CD4-positive, alpha-beta memory T cell (primary cell): ENCODE measurements at regions of chr3 and their contacts with region 1.

Region 1: GRCh38 chr3:128322066-128323022 is 144.3 kb downstream of the DNAJB8 start:
- DNase-seq: peak; percentile 54 to 63 (median 61)
- H3K4me3 ChIP-seq: no peak overlapping the region
- H3K4me3 Mint-ChIP-seq: no peak overlapping the region
- H3K27ac ChIP-seq: no peak overlapping the region
- H3K27ac Mint-ChIP-seq: peak overlapping the region in 5 of 7 donors; percentile 18 to 57 (median 22)
- H3K4me1 ChIP-seq: peaks cover 42% of the 10 kb centered on the region
- H3K4me1 Mint-ChIP-seq: peaks cover 9 to 63% (median 29%) of the 10 kb centered on the region in 4 donors
- H3K27me3 ChIP-seq: no peaks in the 10 kb centered on the region
- H3K27me3 Mint-ChIP-seq: no peaks in the 10 kb centered on the region

Region 2: DNA sequence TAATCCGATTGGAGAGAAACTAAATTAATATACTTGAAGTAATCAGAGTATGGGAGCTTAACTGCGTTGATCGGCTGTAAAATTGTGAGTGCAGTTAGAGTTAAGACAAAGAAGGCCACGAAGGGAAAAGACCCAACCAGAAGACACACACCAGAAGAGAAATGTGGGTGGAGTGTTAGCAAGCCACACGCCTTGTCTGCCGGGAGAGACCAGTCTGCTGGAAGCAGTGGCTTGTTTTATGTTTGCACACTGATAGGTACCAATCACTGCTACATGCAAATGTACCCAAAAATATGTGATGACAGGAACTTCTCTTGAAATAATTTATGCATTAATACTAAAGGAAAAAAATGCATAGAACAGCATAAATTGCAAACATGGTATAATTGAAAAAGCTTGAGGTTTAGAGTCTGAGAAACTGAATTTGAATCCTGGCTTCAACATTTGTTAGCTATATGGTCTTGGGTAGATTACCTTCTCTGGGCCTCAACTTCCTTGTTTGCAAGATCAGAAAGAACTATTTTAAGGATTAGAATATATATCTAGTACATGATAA is 146.0 kb before region 1 on chr3:
- CTCF ChIA-PET with region 1: interaction called, 10 read pairs
- POLR2A ChIA-PET with region 1: no interaction called
- intact Hi-C with region 1: no loop called
- DNase-seq: no peak
- H3K4me3 ChIP-seq: no peak overlapping the region
- H3K4me3 Mint-ChIP-seq: no peak overlapping the region
- H3K27ac ChIP-seq: no peak overlapping the region
- H3K27ac Mint-ChIP-seq: no peak overlapping the region
- H3K4me1 ChIP-seq: no peaks in the 10 kb centered on the region
- H3K4me1 Mint-ChIP-seq: peaks cover 22 to 52% (median 35%) of the 10 kb centered on the region in 4 donors
- H3K27me3 ChIP-seq: no peaks in the 10 kb centered on the region
- H3K27me3 Mint-ChIP-seq: no peaks in the 10 kb centered on the region

Region 3: DNA sequence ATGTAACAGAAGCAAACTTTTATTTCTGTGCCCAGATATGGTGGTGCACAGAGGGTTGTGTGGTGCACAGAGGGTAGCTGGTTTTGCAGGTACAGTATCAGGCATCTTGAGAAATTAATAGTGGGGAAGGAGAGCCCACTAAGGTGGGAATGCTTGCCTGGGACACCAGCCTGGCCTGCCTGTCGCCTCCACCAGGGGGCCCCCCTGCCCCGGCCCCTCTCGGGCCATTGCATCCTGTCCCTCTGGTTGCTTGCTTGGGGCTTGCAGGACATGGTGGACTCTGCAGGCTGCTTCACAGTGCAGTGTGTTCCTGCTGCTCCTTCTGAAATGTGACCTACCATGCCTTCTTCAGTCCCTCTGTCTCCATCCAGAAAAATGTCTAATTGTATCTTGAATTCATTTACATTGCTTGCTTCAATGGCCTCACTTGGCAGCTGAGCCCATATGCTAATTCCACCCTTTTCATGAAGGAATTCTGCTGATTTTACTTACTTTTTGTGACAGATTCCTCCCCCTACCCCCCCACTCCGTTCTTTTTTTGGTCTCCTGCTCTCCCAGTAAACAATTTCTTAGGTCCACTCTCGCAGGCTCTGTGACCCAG is 95.4 kb before region 1 on chr3:
- CTCF ChIA-PET with region 1: interaction called, 145 read pairs
- POLR2A ChIA-PET with region 1: interaction called, 3 read pairs
- intact Hi-C with region 1: loop called (anchors 1 kb)
- DNase-seq: peak in 4 of 5 donors; percentile 19 to 30 (median 23)
- H3K4me3 ChIP-seq: no peak overlapping the region
- H3K4me3 Mint-ChIP-seq: peak overlapping the region in 2 of 8 donors; percentile 13 to 51
- H3K27ac ChIP-seq: no peak overlapping the region
- H3K27ac Mint-ChIP-seq: peak overlapping the region in 1 of 7 donors; percentile 0
- H3K4me1 ChIP-seq: no peaks in the 10 kb centered on the region
- H3K4me1 Mint-ChIP-seq: peaks cover 7 to 14% (median 11%) of the 10 kb centered on the region in 4 donors
- H3K27me3 ChIP-seq: no peaks in the 10 kb centered on the region
- H3K27me3 Mint-ChIP-seq: no peaks in the 10 kb centered on the region

Region 4: DNA sequence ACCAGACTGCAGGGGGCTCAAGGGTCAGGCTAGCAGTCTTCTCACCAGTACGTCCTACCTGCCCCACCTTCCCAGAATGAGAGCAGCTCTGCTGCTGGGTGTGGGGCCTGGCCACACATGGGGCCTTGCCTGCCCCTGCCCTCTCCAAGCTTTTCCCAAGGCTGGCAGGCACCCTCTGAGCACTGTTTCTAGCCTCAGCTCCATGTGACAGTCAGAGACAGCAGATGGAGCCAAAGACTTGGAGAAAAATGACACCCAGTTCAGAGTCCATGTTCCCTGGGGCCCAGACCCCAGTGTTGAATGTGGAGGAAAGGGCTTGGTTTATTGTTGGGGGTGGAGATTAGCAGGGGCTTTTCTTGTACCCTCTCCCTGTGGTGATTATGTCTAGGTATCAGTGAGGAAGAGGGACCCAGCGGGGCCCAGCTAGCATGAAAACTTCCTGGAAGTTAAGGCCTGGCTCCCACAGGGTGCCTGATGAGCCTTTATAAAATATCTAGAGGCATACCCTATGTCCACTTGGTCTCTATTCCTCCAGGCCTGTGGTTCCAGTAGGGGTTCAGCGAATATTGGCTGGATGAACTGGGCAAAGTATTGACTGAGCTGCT is 15.2 kb before region 1 on chr3:
- CTCF ChIA-PET with region 1: interaction called, 44 read pairs
- POLR2A ChIA-PET with region 1: no interaction called
- intact Hi-C with region 1: no loop called
- DNase-seq: no peak
- H3K4me3 ChIP-seq: no peak overlapping the region
- H3K4me3 Mint-ChIP-seq: no peak overlapping the region
- H3K27ac ChIP-seq: no peak overlapping the region
- H3K27ac Mint-ChIP-seq: peak overlapping the region in 1 of 7 donors; percentile 29
- H3K4me1 ChIP-seq: no peaks in the 10 kb centered on the region
- H3K4me1 Mint-ChIP-seq: peaks cover 4 to 10% (median 8%) of the 10 kb centered on the region in 4 donors
- H3K27me3 ChIP-seq: no peaks in the 10 kb centered on the region
- H3K27me3 Mint-ChIP-seq: no peaks in the 10 kb centered on the region

Region 5: DNA sequence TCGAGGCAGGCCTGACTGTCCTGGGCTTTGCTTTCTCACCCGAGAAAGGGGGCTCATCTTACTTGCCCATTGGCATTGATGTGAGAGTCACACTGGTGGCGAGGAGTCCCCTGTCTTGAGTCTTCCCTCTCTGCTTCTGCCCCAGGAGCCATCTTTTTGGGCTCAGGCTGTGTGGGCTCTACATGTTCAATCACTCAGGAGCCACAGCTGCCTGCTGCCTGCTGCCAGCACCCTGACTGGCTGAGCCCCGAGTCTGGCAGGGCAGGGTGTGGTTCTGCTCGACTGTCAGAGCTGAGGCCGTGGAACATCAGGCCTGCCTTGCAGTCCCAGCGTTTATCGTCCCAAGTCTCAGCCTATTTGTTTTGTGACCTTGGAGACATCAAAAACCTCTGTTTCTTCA is 11.8 kb after region 1 on chr3:
- CTCF ChIA-PET with region 1: interaction called, 12 read pairs
- POLR2A ChIA-PET with region 1: no interaction called
- intact Hi-C with region 1: no loop called
- DNase-seq: no peak
- H3K4me3 ChIP-seq: no peak overlapping the region
- H3K4me3 Mint-ChIP-seq: no peak overlapping the region
- H3K27ac ChIP-seq: no peak overlapping the region
- H3K27ac Mint-ChIP-seq: peak overlapping the region in 1 of 7 donors; percentile 8
- H3K4me1 ChIP-seq: no peaks in the 10 kb centered on the region
- H3K4me1 Mint-ChIP-seq: peaks cover 0 to 2% (median 0%) of the 10 kb centered on the region in 4 donors
- H3K27me3 ChIP-seq: no peaks in the 10 kb centered on the region
- H3K27me3 Mint-ChIP-seq: no peaks in the 10 kb centered on the region

Region 6: GRCh38 chr3:128344052-128344735 is 21.9 kb after region 1 on chr3:
- CTCF ChIA-PET with region 1: no interaction called
- POLR2A ChIA-PET with region 1: no interaction called
- intact Hi-C with region 1: no loop called
- DNase-seq: no peak
- H3K4me3 ChIP-seq: no peak overlapping the region
- H3K4me3 Mint-ChIP-seq: no peak overlapping the region
- H3K27ac ChIP-seq: no peak overlapping the region
- H3K27ac Mint-ChIP-seq: no peak overlapping the region
- H3K4me1 ChIP-seq: no peaks in the 10 kb centered on the region
- H3K4me1 Mint-ChIP-seq: no peaks in the 10 kb centered on the region
- H3K27me3 ChIP-seq: no peaks in the 10 kb centered on the region
- H3K27me3 Mint-ChIP-seq: no peaks in the 10 kb centered on the region

Region 7: GRCh38 chr3:128385080-128385832 is 62.9 kb after region 1 on chr3:
- CTCF ChIA-PET with region 1: no interaction called
- POLR2A ChIA-PET with region 1: no interaction called
- intact Hi-C with region 1: no loop called
- DNase-seq: no peak
- H3K4me3 ChIP-seq: no peak overlapping the region
- H3K4me3 Mint-ChIP-seq: no peak overlapping the region
- H3K27ac ChIP-seq: no peak overlapping the region
- H3K27ac Mint-ChIP-seq: peak overlapping the region in 2 of 7 donors; percentile 23 to 69
- H3K4me1 ChIP-seq: no peaks in the 10 kb centered on the region
- H3K4me1 Mint-ChIP-seq: peaks cover 0 to 7% (median 2%) of the 10 kb centered on the region in 4 donors
- H3K27me3 ChIP-seq: no peaks in the 10 kb centered on the region
- H3K27me3 Mint-ChIP-seq: no peaks in the 10 kb centered on the region

Region 8: DNA sequence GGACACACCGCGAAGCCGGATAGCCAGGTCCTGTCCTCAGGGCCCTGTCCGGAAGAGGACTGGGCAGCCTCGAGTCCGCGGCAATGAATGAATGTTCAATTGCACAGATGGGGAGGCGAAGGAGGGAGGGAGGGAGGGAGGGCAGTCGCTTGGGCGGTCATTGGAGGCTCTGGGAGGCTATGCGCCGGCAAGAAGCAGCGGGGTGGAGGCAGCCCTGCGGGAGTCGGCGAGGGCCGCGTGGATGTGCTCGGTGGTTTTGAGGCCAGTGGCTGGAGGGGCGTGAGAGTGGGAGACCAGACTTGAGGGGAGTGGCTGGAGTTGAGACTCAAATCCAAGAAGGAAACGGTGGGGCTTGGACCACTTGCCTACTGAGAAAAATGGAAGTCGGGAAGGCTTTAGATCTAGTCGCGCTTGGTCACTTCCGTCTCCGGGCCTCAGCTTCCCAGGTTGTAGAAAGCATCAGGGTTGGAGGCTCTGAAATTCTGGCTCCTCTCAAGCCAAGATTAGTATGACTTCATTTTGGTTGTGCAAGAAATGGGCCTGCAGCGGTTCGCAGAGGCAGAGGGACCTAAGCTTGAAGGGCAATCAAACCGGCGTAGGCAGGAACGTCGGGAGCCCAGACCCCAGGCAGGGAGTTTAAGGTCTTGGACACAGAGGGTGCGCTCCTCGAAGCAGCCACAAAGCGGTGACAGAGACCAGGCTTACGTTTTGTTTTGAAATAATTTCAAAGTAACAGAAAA is 1305.3 kb after region 1 on chr3:
- CTCF ChIA-PET with region 1: no interaction called
- POLR2A ChIA-PET with region 1: no interaction called
- intact Hi-C with region 1: no loop called
- DNase-seq: peak; percentile 68 to 73 (median 69)
- H3K4me3 ChIP-seq: peak overlapping the region; percentile 64 to 70
- H3K4me3 Mint-ChIP-seq: peak overlapping the region; percentile 87 to 93 (median 90)
- H3K27ac ChIP-seq: peak overlapping the region; percentile 18
- H3K27ac Mint-ChIP-seq: peak overlapping the region; percentile 64 to 92 (median 88)
- H3K4me1 ChIP-seq: peaks cover 10% of the 10 kb centered on the region
- H3K4me1 Mint-ChIP-seq: peaks cover 7 to 22% (median 17%) of the 10 kb centered on the region in 4 donors
- H3K27me3 ChIP-seq: no peaks in the 10 kb centered on the region
- H3K27me3 Mint-ChIP-seq: no peaks in the 10 kb centered on the region